Transverse colon (tissue), 4 donors: ENCODE measurements at regions of chr7 and their contacts with region 1.

Region 1: DNA sequence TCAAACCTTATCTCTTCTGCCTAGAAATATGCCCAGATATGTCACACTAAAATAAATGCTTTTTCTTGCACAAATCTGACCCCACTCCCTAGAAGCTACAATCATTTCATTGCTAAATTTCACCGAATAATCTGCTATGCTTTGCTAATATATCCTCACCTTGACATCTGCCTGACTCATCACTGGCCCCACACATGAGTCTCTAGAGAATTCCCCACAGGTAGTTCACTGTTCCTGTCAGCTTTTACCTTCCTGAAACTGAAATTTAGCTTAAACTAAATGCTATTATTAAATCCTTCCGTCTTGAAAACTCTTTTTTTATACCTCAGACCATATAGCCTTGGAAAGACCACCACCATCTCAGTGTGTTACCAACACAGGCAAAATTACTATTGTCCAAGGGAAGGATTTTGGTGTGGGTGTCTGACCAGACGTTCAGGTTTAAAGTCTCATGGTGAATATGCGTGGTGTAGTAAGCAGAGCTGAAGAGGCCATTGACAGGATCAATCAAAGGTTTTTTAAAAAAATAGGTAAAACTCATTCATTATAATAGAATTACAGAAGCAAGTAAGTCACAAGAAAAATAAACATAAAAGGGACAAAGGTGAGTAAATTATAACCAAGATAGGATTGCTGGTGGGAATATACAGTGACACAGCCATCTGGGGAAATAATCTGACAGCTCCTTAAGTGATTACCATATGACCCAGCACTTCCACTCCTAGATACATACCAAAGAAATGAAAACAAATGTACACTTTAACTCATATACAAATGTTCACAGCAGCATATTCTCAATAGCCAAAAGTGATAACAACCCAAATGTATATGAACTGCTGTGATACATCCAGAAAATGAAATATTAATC is 173.5 kb downstream of the KMT2E start:
- DNase-seq: no peak
- H3K4me3 ChIP-seq: no peak overlapping the region
- H3K27ac ChIP-seq: no peak overlapping the region
- H3K4me1 ChIP-seq: no peaks in the 10 kb centered on the region
- H3K27me3 ChIP-seq: no peaks in the 10 kb centered on the region
- CTCF ChIP-seq: no peak
- EP300 ChIP-seq: no peak
- POLR2A ChIP-seq: no peak

Region 2: GRCh38 chr7:105055621-105056020 is 131.9 kb before region 1 on chr7:
- in situ Hi-C with region 1: no loop called
- intact Hi-C with region 1: no loop called
- DNase-seq: no peak
- H3K4me3 ChIP-seq: no peak overlapping the region
- H3K27ac ChIP-seq: no peak overlapping the region
- H3K4me1 ChIP-seq: peaks cover 0 to 57% (median 22%) of the 10 kb centered on the region in 4 donors
- H3K27me3 ChIP-seq: no peaks in the 10 kb centered on the region
- CTCF ChIP-seq: no peak
- EP300 ChIP-seq: no peak
- POLR2A ChIP-seq: no peak

Region 3: DNA sequence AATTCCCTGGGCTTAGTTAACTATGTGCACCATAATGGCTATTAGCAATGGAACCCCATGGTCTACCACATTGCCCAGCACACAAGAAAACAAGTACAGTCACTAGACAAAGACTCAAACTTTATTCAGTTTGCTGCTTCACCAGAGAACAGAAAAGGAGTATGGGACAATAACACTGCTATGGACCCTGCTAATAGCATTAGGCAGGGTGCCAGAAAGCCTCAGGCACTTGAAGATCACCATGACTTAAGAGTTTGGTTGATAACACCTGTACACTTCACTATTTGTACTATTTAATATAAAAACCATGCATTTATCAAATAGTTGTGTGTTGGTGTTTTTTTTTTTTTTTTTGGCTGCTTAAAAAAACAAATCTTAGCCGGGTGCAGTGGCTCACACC is 13.9 kb before region 1 on chr7:
- in situ Hi-C with region 1: no loop called
- intact Hi-C with region 1: loop called (anchors 1 kb)
- DNase-seq: no peak
- H3K4me3 ChIP-seq: no peak overlapping the region
- H3K27ac ChIP-seq: no peak overlapping the region
- H3K4me1 ChIP-seq: no peaks in the 10 kb centered on the region
- H3K27me3 ChIP-seq: no peaks in the 10 kb centered on the region
- CTCF ChIP-seq: no peak
- EP300 ChIP-seq: no peak
- POLR2A ChIP-seq: no peak